ENCODE measurements at regions of chr12 and their contacts with region 1.

Region 1: GRCh38 chr12:6451348-6452244 is at the start of gene TAPBPL:
- DNase-seq: peak; percentile 62
- ATAC-seq: peak; percentile 86
- H3K4me3 Mint-ChIP-seq: peak within 1 kb of the TSS; percentile 97
- H3K27ac Mint-ChIP-seq: peak within 1 kb of the TSS; percentile 99
- H3K4me1 Mint-ChIP-seq: peaks cover 58% of the 10 kb centered on the region
- H3K27me3 Mint-ChIP-seq: no peaks in the 10 kb centered on the region
- CTCF ChIP-seq: no peak
- total RNA-seq, gene TAPBPL: 52.5 and 64.0 TPM in 2 replicates

Region 2: GRCh38 chr12:6316922-6317692 is 134.5 kb before region 1 on chr12:
- CTCF ChIA-PET with region 1: no interaction called
- POLR2A ChIA-PET with region 1: no interaction called
- intact Hi-C with region 1: no loop called
- DNase-seq: no peak
- ATAC-seq: no peak
- H3K4me3 Mint-ChIP-seq: no peak overlapping the region
- H3K27ac Mint-ChIP-seq: no peak overlapping the region
- H3K4me1 Mint-ChIP-seq: peaks cover 2% of the 10 kb centered on the region
- H3K27me3 Mint-ChIP-seq: peaks cover 78% of the 10 kb centered on the region
- CTCF ChIP-seq: no peak

Region 3: GRCh38 chr12:6438345-6438744 is 13.3 kb before region 1 on chr12:
- CTCF ChIA-PET with region 1: interaction called, 3 read pairs
- POLR2A ChIA-PET with region 1: interaction called, 26 read pairs
- intact Hi-C with region 1: loop called (anchors 1 kb)
- DNase-seq: no peak
- ATAC-seq: no peak
- H3K4me3 Mint-ChIP-seq: no peak overlapping the region
- H3K27ac Mint-ChIP-seq: no peak overlapping the region
- H3K4me1 Mint-ChIP-seq: peaks cover 29% of the 10 kb centered on the region
- H3K27me3 Mint-ChIP-seq: no peaks in the 10 kb centered on the region
- CTCF ChIP-seq: no peak

Region 4: GRCh38 chr12:7047306-7047705 is 595.7 kb after region 1 on chr12:
- CTCF ChIA-PET with region 1: no interaction called
- POLR2A ChIA-PET with region 1: no interaction called
- intact Hi-C with region 1: no loop called
- DNase-seq: no peak
- ATAC-seq: no peak
- H3K4me3 Mint-ChIP-seq: no peak overlapping the region
- H3K27ac Mint-ChIP-seq: no peak overlapping the region
- H3K4me1 Mint-ChIP-seq: peaks cover 11% of the 10 kb centered on the region
- H3K27me3 Mint-ChIP-seq: peaks cover 2% of the 10 kb centered on the region
- CTCF ChIP-seq: no peak